HepG2 (cell line): ENCODE measurements at regions of chr7 and their contacts with region 1.

Region 1: GRCh38 chr7:123154231-123154860 is 45.4 kb downstream of the SLC13A1 start:
- DNase-seq: peak; percentile 74
- ATAC-seq: peak; percentile 93
- H3K4me3 ChIP-seq: no peak overlapping the region
- H3K27ac ChIP-seq: no peak overlapping the region
- H3K4me1 ChIP-seq: no peaks in the 10 kb centered on the region
- H3K27me3 ChIP-seq: no peaks in the 10 kb centered on the region
- CTCF ChIP-seq: peak; percentile 85
- EP300 ChIP-seq: no peak
- POLR2A ChIP-seq: no peak
- RAD21 ChIP-seq: peak; percentile 38; the same call in 1 of the 2 replicates

Region 2: DNA sequence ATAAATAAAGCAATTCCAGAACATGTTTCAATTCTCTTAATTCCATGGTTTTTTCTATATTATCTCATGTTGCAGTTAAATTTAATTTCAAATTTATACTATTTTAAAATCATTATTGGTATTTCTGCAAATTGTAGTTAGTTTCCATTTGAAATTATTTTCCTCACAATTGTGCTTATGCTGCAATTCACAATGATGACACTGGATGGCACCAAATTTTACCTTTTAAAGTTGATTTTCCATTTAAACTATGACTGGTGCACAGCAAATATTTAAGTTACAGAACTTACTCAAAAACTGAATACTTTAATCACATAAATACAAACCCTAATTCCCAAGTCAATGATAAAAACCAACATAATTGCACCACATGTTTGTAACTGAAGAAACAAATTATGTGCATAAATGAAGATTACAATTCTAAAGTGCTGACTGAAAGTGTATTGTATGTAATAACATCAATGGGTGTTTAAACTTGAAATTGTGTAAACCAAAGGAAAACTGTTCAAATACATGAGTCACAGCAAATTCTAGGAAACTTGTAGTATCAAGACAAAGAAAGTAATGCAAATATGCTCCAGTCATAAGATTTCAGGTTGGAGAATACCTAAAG is 935.0 kb before region 1 on chr7:
- CTCF ChIA-PET with region 1: no interaction called
- POLR2A ChIA-PET with region 1: no interaction called
- in situ Hi-C with region 1: no loop called
- intact Hi-C with region 1: loop called (anchors 1 kb)
- DNase-seq: peak; percentile 13
- ATAC-seq: no peak
- H3K4me3 ChIP-seq: no peak overlapping the region
- H3K27ac ChIP-seq: no peak overlapping the region
- H3K4me1 ChIP-seq: peaks cover 9% of the 10 kb centered on the region
- H3K27me3 ChIP-seq: no peaks in the 10 kb centered on the region; a peak in 1 of 5 replicates
- CTCF ChIP-seq: peak; percentile 64
- EP300 ChIP-seq: no peak
- POLR2A ChIP-seq: no peak
- RAD21 ChIP-seq: peak; percentile 52; the same call in 1 of the 2 replicates

Region 3: GRCh38 chr7:122290476-122290875 is 863.9 kb before region 1 on chr7:
- CTCF ChIA-PET with region 1: no interaction called
- POLR2A ChIA-PET with region 1: no interaction called
- in situ Hi-C with region 1: no loop called
- intact Hi-C with region 1: loop called (anchors 5 kb)
- DNase-seq: no peak
- ATAC-seq: no peak
- H3K4me3 ChIP-seq: no peak overlapping the region
- H3K27ac ChIP-seq: no peak overlapping the region
- H3K4me1 ChIP-seq: no peaks in the 10 kb centered on the region
- H3K27me3 ChIP-seq: no peaks in the 10 kb centered on the region
- CTCF ChIP-seq: peak; percentile 42
- EP300 ChIP-seq: no peak
- POLR2A ChIP-seq: no peak
- RAD21 ChIP-seq: no peak

Region 4: GRCh38 chr7:122528879-122529481 is 625.4 kb before region 1 on chr7:
- CTCF ChIA-PET with region 1: no interaction called
- POLR2A ChIA-PET with region 1: no interaction called
- in situ Hi-C with region 1: no loop called
- intact Hi-C with region 1: loop called (anchors 5 kb)
- DNase-seq: peak; percentile 21
- ATAC-seq: no peak
- H3K4me3 ChIP-seq: no peak overlapping the region
- H3K27ac ChIP-seq: no peak overlapping the region
- H3K4me1 ChIP-seq: no peaks in the 10 kb centered on the region
- H3K27me3 ChIP-seq: no peaks in the 10 kb centered on the region
- CTCF ChIP-seq: peak; percentile 52
- EP300 ChIP-seq: no peak
- POLR2A ChIP-seq: no peak
- RAD21 ChIP-seq: no peak

Region 5: DNA sequence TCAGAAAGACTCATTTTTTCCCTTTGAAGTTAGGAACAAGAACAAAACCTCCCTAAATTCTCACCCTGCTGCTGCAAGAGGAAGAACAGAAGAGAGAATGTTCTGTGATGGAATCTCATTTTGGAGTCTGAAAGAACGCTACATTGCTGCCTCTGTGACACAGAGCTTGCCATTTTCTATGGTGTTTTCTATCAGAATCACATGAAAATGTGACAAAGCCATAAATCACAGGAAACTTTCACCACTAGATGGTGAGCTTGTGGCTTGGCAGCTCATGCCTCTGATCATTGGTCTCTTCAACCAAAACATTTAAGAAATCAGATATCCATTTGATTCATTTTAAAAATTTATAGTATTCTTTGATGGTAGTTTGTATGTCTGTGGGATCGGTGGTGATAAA is 351.0 kb before region 1 on chr7:
- CTCF ChIA-PET with region 1: interaction called, 6 read pairs
- POLR2A ChIA-PET with region 1: no interaction called
- in situ Hi-C with region 1: loop called (anchors 25 kb)
- intact Hi-C with region 1: loop called (anchors 1 kb)
- DNase-seq: peak; percentile 36
- ATAC-seq: peak; percentile 69; the same call in 2 of the 3 replicates
- H3K4me3 ChIP-seq: no peak overlapping the region
- H3K27ac ChIP-seq: no peak overlapping the region
- H3K4me1 ChIP-seq: peaks cover 13% of the 10 kb centered on the region
- H3K27me3 ChIP-seq: no peaks in the 10 kb centered on the region
- CTCF ChIP-seq: peak; percentile 71
- EP300 ChIP-seq: no peak
- POLR2A ChIP-seq: no peak
- RAD21 ChIP-seq: peak; percentile 51; the same call in 1 of the 2 replicates

Region 6: DNA sequence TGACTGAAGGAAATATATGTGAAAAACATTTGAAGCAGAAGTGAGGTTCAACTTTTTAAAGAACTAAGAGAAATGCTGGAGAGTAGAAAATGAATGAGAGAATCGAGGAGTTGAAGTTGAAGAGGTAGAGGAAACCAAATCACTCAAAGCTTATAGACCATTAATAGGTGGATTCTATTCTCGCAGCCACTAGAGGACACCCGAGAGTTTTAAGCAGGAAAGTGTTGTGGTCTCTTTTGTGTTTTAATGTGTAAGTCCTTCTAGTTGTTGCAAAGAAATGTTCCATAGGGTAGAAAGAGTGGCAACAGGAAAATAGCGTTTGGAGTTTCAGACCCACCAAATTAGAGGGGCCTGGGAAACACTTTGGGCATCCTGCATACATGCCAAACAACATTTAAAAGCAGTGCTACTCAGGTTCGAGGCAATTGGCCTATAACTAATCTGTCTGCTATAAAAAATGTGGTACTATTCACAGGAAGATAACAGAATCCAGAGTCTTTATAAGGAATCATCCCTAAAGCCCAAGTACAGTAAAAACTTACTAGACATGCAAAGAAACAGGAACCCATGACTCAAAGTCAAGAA is 83.6 kb before region 1 on chr7:
- CTCF ChIA-PET with region 1: interaction called, 13 read pairs
- POLR2A ChIA-PET with region 1: no interaction called
- in situ Hi-C with region 1: no loop called
- intact Hi-C with region 1: loop called (anchors 1 kb)
- DNase-seq: peak; percentile 46
- ATAC-seq: peak; percentile 81
- H3K4me3 ChIP-seq: no peak overlapping the region
- H3K27ac ChIP-seq: no peak overlapping the region
- H3K4me1 ChIP-seq: no peaks in the 10 kb centered on the region
- H3K27me3 ChIP-seq: no peaks in the 10 kb centered on the region
- CTCF ChIP-seq: peak; percentile 67
- EP300 ChIP-seq: no peak
- POLR2A ChIP-seq: no peak
- RAD21 ChIP-seq: no peak

Region 7: DNA sequence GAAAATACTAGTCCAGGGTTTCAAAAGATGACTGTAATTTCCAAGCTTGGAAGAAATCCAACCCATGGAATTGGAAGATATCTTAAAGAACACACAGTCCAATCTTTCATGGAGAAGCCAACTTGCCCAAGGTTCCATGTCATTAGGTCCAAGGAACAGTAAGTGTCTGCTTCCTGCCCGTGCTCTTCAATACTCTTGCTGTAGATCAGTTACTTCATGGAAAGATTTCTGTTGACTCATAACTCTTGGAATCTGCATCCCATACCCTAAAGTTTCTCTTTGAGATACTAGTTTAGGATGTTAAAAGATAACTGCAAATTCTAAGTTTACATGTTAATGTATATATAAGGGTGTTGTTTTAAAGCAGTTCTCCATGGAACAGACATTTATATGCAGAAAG is 173.3 kb after region 1 on chr7:
- CTCF ChIA-PET with region 1: no interaction called
- POLR2A ChIA-PET with region 1: no interaction called
- in situ Hi-C with region 1: no loop called
- intact Hi-C with region 1: no loop called
- DNase-seq: no peak
- ATAC-seq: no peak
- H3K4me3 ChIP-seq: no peak overlapping the region
- H3K27ac ChIP-seq: no peak overlapping the region
- H3K4me1 ChIP-seq: no peaks in the 10 kb centered on the region
- H3K27me3 ChIP-seq: no peaks in the 10 kb centered on the region
- CTCF ChIP-seq: no peak
- EP300 ChIP-seq: no peak
- POLR2A ChIP-seq: no peak
- RAD21 ChIP-seq: no peak